ENCODE measurements at regions of chr10 and their contacts with region 1.

Region 1: GRCh38 chr10:80699602-80700039 is 161.9 kb downstream of the SH2D4B start:
- DNase-seq: peak; percentile 67
- H3K27ac ChIP-seq: no peak overlapping the region
- CTCF ChIP-seq: peak; percentile 88

Region 2: GRCh38 chr10:80805343-80806020 is 105.9 kb after region 1 on chr10:
- CTCF ChIA-PET with region 1: no interaction called
- POLR2A ChIA-PET with region 1: no interaction called
- DNase-seq: no peak
- H3K27ac ChIP-seq: no peak overlapping the region
- CTCF ChIP-seq: no peak

Region 3: GRCh38 chr10:80924063-80924952 is 224.7 kb after region 1 on chr10:
- CTCF ChIA-PET with region 1: interaction called, 30 read pairs
- POLR2A ChIA-PET with region 1: no interaction called
- DNase-seq: peak; percentile 30
- H3K27ac ChIP-seq: no peak overlapping the region
- CTCF ChIP-seq: peak; percentile 65

Region 4: GRCh38 chr10:81018708-81019365 is 319.2 kb after region 1 on chr10:
- CTCF ChIA-PET with region 1: interaction called, 16 read pairs
- POLR2A ChIA-PET with region 1: no interaction called
- DNase-seq: no peak
- H3K27ac ChIP-seq: no peak overlapping the region
- CTCF ChIP-seq: peak; percentile 75